ENCODE measurements at regions of chr19 and their contacts with region 1.

Region 1: DNA sequence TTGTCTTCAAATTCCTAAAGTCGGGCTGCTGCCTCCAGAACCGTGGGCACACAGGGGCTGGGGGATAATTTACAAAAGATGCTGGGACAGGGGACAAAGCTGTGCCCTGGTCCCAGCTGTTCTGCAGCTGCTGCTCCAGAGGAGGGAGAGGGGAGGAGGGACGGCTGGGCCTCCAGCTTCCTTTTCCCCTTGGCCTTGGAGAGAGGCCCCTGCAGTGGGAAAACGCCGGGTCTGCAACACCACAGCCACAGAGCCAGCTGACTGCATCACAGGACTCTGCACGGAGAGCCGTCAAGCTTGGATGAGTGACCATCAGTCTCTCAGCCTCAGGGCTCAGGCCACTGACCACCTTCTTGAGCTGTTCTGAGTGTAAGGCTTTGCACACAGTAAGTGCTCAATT is 6.1 kb downstream of the DOCK6 start:
- DNase-seq: no peak

Region 2: DNA sequence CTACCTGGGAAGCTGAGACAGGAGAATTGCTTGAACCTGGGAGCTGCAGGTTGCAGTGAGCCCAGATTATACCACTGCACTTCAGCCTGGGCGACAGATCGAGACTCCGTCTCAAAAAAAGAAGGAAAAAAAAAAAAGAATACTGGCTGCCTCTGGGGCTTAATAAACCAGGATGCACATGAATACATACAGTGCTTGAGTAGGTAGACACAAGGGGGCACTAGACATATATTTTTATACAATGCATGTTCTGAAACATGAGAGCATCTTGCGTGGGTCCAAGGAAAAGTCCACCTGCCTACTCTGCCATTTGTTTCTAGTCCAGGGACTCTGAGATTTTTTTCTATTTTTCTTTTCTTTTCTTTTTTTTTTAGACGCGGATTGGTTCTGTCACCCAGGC is 784.3 kb before region 1 on chr19:
- intact Hi-C with region 1: loop called in 1 of 2 experiments (anchors 5 kb)
- DNase-seq: no peak

Region 3: DNA sequence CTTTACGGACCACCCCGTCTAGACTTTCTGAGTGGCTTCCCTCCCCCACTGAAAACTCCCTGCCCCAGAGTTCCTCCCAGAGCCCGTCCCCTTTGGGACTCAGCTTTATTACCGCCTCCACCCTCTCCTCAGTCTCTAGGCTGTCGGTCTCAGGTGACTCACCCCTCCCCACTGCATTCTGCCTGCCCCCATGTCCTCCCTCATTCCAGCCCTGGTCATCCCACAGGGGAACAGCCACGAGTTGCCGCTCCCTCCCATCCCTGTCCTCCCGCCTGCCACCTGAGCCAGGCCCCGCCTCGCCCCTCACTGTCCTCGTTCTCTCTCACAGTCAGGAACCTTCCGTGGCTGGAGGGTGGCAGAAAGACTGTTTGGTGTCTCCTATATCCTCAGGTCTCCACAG is 238.0 kb before region 1 on chr19:
- intact Hi-C with region 1: no loop called
- DNase-seq: no peak

Region 4: GRCh38 chr19:11164879-11165406 is 91.2 kb before region 1 on chr19:
- intact Hi-C with region 1: no loop called
- DNase-seq: peak; percentile 96

Region 5: DNA sequence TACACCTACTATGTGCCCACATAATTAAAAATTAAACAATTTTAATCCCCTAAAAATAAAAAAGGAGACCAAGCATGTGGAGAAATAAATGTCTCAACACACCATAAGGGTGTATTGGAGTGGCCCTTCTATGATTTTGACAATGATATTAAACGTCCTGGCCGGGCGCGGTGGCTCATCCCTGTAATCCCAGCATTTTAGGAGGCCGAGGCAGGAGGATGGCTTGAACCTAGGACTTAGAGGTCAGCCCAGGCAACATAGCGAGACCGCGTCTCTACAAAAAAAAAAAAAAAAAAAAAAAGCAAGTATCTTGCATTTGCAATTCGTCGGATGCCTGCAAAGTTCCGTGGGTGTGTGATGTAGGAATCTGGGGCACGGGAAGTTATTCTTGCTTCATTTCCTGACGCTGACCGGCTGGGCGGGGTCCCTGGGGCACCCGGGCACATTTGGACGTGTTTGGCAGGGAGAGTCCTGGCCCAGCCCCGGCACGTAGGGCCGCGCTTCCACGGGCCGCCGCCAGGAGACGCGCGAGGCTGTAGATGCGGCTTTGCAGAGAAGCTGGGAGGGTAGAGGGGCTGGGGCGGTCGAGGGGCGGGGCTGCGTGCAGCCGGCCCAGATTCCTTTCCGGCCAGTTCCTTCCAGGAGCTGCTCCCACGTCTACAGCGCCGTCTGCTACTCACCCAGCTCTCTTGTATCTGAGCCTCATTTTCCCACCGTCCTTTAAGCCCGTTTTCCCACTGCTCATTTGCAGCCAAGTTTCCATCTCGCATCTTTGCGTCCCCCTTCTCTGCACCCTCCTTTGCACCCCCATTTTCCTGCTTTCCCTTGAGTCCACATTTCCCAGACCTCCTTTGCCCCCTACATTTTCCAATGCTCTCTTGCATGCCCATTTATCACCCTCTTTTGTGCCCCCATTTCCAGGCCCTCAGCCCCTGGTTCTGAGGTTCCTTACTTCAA is 37.5 kb after region 1 on chr19:
- intact Hi-C with region 1: no loop called
- DNase-seq: peak; percentile 99

Measured in posterior vena cava (tissue), 2 donors.